Right lobe of liver (tissue), 6 donors: ENCODE measurements at regions of chr18 and their contacts with region 1.

Region 1: GRCh38 chr18:43170586-43170985 is 55.1 kb upstream of the RIT2 start:
- DNase-seq: no peak
- ATAC-seq: no peak
- H3K4me3 ChIP-seq: no peak overlapping the region
- H3K27ac ChIP-seq: no peak overlapping the region
- H3K4me1 ChIP-seq: no peaks in the 10 kb centered on the region
- H3K27me3 ChIP-seq: no peaks in the 10 kb centered on the region
- CTCF ChIP-seq: no peak
- POLR2A ChIP-seq: no peak

Region 2: DNA sequence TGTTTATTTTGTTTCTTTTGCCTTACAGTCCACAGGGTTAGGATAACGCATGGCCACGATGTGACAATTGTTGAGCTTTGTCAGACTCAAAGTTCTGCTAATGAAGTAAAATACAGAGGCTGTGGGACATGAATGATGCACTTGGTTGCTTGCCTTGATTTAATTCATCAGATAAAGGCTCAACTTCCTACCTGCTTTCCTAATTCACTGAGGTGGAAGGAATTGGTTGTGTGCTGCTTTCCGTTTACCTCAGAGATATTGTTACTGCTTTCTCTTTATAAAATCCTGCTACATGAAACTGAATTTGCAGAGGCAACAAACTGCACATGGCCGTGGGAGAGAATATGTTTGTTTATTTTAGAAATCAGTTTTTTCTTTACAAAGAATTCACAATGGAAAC is 61.7 kb before region 1 on chr18:
- intact Hi-C with region 1: loop called in 1 of 2 experiments (anchors 10 kb)
- DNase-seq: no peak
- ATAC-seq: no peak
- H3K4me3 ChIP-seq: no peak overlapping the region
- H3K27ac ChIP-seq: no peak overlapping the region
- H3K4me1 ChIP-seq: no peaks in the 10 kb centered on the region
- H3K27me3 ChIP-seq: no peaks in the 10 kb centered on the region
- CTCF ChIP-seq: no peak
- POLR2A ChIP-seq: no peak